ENCODE measurements at regions of chr11 and their contacts with region 1.

Region 1: DNA sequence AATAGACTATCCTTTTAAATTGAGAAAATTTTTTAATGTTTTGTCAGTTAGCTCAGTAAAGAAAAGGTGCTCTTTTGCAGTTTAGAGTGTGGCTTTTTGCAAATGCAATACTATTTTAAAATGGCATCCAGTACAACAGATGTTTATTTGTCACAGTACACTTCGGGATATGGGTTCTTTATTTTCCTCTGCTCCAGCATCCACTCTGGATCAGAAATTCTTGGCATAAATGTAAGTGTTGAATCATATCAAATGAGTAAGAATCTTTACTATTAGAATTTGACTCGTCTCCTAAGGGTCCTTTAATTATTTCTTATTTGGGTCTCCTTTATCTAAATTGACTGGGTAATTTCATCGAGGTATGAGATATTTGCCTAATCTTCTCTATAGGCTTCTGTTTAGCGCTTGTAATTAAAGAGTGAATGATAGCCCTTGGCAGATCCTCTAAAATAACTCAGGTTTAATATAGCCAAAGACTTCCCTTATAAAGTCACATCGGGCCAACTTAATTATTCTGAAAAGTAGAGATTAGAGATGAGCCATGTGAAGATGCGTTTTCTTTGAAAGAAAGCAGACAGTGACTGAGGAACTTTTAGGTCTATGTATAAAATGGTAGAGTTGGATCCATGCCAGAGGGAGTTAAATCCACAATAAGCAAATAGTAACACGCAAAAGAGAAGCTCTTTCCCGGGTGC is 132.7 kb downstream of the CASP12 start:
- DNase-seq: no peak
- ATAC-seq: no peak
- H3K4me3 ChIP-seq: no peak overlapping the region
- H3K4me3 Mint-ChIP-seq: no peak overlapping the region
- H3K27ac ChIP-seq: no peak overlapping the region
- H3K27ac Mint-ChIP-seq: no peak overlapping the region
- H3K4me1 ChIP-seq: no peaks in the 10 kb centered on the region
- H3K4me1 Mint-ChIP-seq: peaks cover 5 to 13% (median 9%) of the 10 kb centered on the region in 3 donors
- H3K27me3 ChIP-seq: no peaks in the 10 kb centered on the region
- H3K27me3 Mint-ChIP-seq: no peaks in the 10 kb centered on the region

Region 2: GRCh38 chr11:104705490-104706190 is 59.9 kb before region 1 on chr11:
- CTCF ChIA-PET with region 1: interaction called in 1 of 2 experiments, 11 read pairs
- POLR2A ChIA-PET with region 1: no interaction called
- DNase-seq: peak; percentile 38 to 88 (median 74)
- ATAC-seq: peak; percentile 97 to 98 (median 98)
- H3K4me3 ChIP-seq: peak overlapping the region; percentile 28 to 32
- H3K4me3 Mint-ChIP-seq: peak overlapping the region; percentile 72 to 82 (median 80)
- H3K27ac ChIP-seq: peak overlapping the region; percentile 86
- H3K27ac Mint-ChIP-seq: peak overlapping the region; percentile 99 to 100
- H3K4me1 ChIP-seq: peaks cover 25 to 47% of the 10 kb centered on the region in 2 experiments
- H3K4me1 Mint-ChIP-seq: peaks cover 63 to 70% (median 70%) of the 10 kb centered on the region in 3 donors
- H3K27me3 ChIP-seq: no peaks in the 10 kb centered on the region
- H3K27me3 Mint-ChIP-seq: no peaks in the 10 kb centered on the region